Heart left ventricle (tissue), 16 donors: ENCODE measurements at regions of chr12 and their contacts with region 1.

Region 1: GRCh38 chr12:128224226-128224625 is 42.7 kb upstream of the TMEM132C start:
- DNase-seq: no peak
- ATAC-seq: no peak
- H3K4me3 ChIP-seq: no peak overlapping the region
- H3K27ac ChIP-seq: no peak overlapping the region
- H3K4me1 ChIP-seq: no peaks in the 10 kb centered on the region
- H3K27me3 ChIP-seq: peaks cover 0 to 9% (median 0%) of the 10 kb centered on the region in 9 donors
- CTCF ChIP-seq: no peak
- POLR2A ChIP-seq: no peak

Region 2: DNA sequence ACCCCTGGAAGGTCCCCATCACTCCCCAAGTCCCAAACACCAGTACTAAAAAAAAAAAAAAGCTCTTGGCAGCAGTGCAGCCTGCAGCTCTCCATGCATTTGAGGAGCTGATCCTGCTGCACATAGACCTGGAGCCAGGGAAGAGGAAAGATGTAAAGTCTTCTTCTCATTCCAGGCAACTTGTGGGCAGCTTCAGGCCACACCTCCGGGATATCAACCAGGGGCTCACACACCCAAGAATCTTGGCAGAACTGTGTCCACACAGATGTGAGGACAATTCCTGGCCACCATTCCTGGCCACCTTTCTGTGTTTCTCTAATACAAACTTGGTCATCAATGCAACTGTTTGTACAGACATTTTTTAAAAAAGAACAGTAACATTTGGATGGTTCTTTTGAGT is 115.4 kb after region 1 on chr12:
- intact Hi-C with region 1: loop called in 1 of 10 experiments (anchors 10 kb)
- DNase-seq: no peak
- ATAC-seq: peak in 1 of 4 donors; percentile 9
- H3K4me3 ChIP-seq: no peak overlapping the region
- H3K27ac ChIP-seq: no peak overlapping the region
- H3K4me1 ChIP-seq: peaks cover 0 to 14% (median 0%) of the 10 kb centered on the region in 12 donors
- H3K27me3 ChIP-seq: peaks cover 0 to 28% (median 4%) of the 10 kb centered on the region in 9 donors
- CTCF ChIP-seq: no peak
- POLR2A ChIP-seq: no peak